MCF 10A (cell line): ENCODE measurements at regions of chr6 and their contacts with region 1.

Region 1: GRCh38 chr6:13407709-13408695 is 79.4 kb downstream of the GFOD1 start:
- DNase-seq: peak; percentile 99
- H3K4me3 Mint-ChIP-seq: peak overlapping the region; percentile 33
- H3K27ac Mint-ChIP-seq: peak overlapping the region; percentile 85
- H3K4me1 Mint-ChIP-seq: peaks cover 52% of the 10 kb centered on the region
- H3K27me3 Mint-ChIP-seq: no peaks in the 10 kb centered on the region
- CTCF ChIP-seq: no peak

Region 2: GRCh38 chr6:13445005-13445743 is 37.2 kb after region 1 on chr6:
- CTCF ChIA-PET with region 1: no interaction called
- POLR2A ChIA-PET with region 1: interaction called, 3 read pairs
- intact Hi-C with region 1: loop called (anchors 5 kb)
- DNase-seq: peak; percentile 87
- H3K4me3 Mint-ChIP-seq: peak overlapping the region; percentile 18
- H3K27ac Mint-ChIP-seq: no peak overlapping the region
- H3K4me1 Mint-ChIP-seq: peaks cover 21% of the 10 kb centered on the region
- H3K27me3 Mint-ChIP-seq: no peaks in the 10 kb centered on the region
- CTCF ChIP-seq: no peak